ENCODE measurements at regions of chr6 and their contacts with region 1.

Region 1: DNA sequence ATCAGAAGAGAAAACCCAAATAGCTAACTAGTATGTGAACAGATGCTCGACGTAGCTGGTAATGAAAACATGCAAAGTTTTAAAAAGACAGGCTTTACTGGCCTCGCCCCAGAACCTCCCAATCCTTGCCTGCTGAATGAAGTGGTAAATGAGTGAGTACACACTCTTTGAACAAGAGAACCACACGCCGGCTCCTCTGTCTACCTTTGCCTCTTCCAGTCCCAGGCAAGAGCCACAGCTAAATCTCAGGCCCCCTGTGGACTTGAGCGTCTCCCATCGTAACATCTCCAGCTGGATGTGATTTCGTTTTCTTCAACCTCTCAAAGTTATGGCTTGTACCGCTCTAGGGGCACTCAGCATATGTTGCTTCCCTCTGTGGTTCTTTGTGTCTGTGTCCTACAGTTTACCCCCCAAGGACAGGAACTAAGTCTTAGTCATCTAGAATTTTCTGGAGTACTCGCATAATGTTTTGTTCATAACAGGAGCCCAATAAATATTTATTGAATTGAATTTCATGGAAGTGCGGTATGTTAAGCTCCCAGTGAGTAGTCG is 153.2 kb upstream of the TAB2 start:
- DNase-seq: no peak
- H3K4me3 ChIP-seq: no peak overlapping the region
- H3K27ac ChIP-seq: no peak overlapping the region
- H3K4me1 ChIP-seq: no peaks in the 10 kb centered on the region
- H3K27me3 ChIP-seq: no peaks in the 10 kb centered on the region
- CTCF ChIP-seq: no peak
- EP300 ChIP-seq: no peak
- POLR2A ChIP-seq: no peak
- RAD21 ChIP-seq: no peak

Region 2: DNA sequence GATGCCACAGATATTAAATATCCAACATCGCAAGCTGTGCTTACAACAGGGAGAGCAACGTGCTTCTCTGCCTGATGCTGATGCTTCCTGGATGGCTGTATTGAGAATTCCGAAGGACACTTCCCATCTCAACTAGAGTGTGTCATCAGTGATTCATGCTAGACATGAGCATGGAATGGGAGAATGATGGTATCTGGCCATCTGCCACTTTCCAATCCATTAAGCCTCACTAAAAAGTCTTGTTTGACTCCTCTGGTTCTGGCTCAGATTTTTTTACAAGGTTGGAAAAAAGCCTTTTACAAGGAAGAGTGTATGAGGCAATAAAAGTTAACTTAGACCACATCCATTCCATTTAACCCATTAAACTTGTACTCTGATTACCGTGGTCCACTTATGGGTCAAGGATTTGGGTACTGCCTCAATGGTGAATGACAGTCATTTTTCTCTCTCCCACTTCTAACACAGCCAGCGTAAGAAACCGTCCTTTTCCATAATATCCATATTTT is 152.2 kb before region 1 on chr6:
- CTCF ChIA-PET with region 1: no interaction called
- POLR2A ChIA-PET with region 1: no interaction called
- DNase-seq: no peak
- H3K4me3 ChIP-seq: no peak overlapping the region
- H3K27ac ChIP-seq: no peak overlapping the region
- H3K4me1 ChIP-seq: peaks cover 7 to 20% (median 13%) of the 10 kb centered on the region in 4 experiments; a peak in 5 of 7 replicates
- H3K27me3 ChIP-seq: no peaks in the 10 kb centered on the region
- CTCF ChIP-seq: no peak
- EP300 ChIP-seq: no peak
- POLR2A ChIP-seq: no peak
- RAD21 ChIP-seq: no peak

Region 3: GRCh38 chr6:149190224-149190831 is 26.1 kb after region 1 on chr6:
- CTCF ChIA-PET with region 1: interaction called, 13 read pairs
- POLR2A ChIA-PET with region 1: no interaction called
- DNase-seq: peak; percentile 46 to 82
- H3K4me3 ChIP-seq: no peak overlapping the region
- H3K27ac ChIP-seq: no peak overlapping the region
- H3K4me1 ChIP-seq: peaks cover 0 to 3% (median 0%) of the 10 kb centered on the region in 4 experiments; a peak in 1 of 7 replicates
- H3K27me3 ChIP-seq: no peaks in the 10 kb centered on the region
- CTCF ChIP-seq: peak; percentile 56 to 74 (median 65)
- EP300 ChIP-seq: no peak
- POLR2A ChIP-seq: no peak
- RAD21 ChIP-seq: peak; percentile 71 to 81

Region 4: GRCh38 chr6:149236589-149236988 is 72.3 kb after region 1 on chr6:
- CTCF ChIA-PET with region 1: no interaction called
- POLR2A ChIA-PET with region 1: no interaction called
- DNase-seq: no peak
- H3K4me3 ChIP-seq: no peak overlapping the region
- H3K27ac ChIP-seq: no peak overlapping the region
- H3K4me1 ChIP-seq: peaks cover 0 to 5% (median 2%) of the 10 kb centered on the region in 4 experiments; a peak in 3 of 7 replicates
- H3K27me3 ChIP-seq: no peaks in the 10 kb centered on the region; a peak in 1 of 7 replicates
- CTCF ChIP-seq: no peak
- EP300 ChIP-seq: no peak
- POLR2A ChIP-seq: no peak
- RAD21 ChIP-seq: no peak

Measured in H1 (cell line).